MCF 10A (cell line): ENCODE measurements at regions of chr1 and their contacts with region 1.

Region 1: DNA sequence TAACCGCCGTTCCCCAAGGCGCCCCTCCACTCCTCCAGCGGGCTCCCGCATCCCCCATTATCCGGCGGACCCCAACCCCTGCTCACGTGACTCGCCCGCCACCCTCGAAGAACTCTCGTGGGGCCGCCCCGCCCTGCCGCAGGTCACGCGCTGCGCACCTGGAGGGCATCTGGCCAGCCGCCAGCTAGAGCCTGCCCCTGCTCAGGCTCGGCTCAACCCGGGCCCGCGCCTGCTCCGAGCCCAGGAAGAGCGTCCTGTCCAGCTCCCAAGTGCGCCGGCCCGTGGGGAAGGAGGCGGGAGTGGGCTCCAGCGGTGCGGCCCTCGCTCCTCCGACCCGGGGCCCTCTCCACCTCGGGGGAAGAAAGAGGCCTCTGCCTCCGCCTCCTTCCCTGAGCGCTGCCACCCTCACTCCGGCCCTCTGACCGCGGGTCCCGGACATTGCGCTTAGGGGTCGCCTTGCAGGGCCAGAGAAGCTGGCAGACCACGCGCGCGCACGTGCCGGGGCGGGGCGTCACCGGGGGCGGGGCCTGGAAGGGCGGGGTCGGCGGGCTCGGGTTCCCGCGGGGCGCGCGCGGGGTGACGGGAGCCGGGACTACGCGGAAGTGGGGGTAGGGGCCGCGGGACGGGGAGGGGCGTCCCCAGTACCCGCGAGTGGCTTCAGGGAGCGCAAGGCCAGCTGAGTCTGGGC is 28.4 kb downstream of the HMGN2 start:
- DNase-seq: peak; percentile 86
- H3K4me3 Mint-ChIP-seq: peak overlapping the region; percentile 86
- H3K27ac Mint-ChIP-seq: peak overlapping the region; percentile 91
- H3K4me1 Mint-ChIP-seq: no peaks in the 10 kb centered on the region
- H3K27me3 Mint-ChIP-seq: no peaks in the 10 kb centered on the region
- CTCF ChIP-seq: no peak

Region 2: DNA sequence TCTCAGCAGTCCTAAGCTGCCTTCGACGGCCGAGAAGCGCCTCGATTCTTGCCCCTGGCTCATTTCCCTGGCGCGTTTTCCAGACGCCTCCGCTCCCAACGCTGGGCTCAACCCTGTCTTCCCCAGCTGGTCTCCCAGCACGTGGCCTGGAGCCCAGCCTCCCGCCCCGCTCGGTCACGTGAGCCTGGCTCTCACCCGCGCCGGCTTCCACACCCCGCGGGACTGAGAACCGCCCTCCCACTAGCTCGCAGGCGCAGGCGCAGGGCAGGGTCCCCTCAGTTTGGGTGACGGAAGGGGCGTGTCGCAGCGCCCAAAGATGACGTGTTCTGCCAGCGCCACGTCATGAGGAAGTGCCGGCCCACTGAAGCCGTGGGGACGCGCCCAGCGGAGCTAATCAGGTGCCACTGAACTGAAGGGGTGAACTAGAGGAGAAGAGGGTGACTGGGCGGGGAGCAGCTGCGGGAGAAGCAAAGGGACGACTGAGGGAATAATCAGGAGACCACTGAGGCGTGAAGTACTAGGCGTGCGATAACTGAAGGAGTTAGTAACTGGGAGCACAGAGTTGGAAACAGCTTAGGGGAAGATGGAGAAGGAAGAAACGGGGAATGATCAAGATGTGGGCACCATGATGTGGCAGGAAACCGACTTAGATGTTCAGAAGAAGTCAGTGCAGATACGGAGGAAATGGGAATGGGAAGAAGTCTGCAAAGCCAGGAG is 68.5 kb before region 1 on chr1 and contains the start of gene DHDDS:
- CTCF ChIA-PET with region 1: no interaction called
- POLR2A ChIA-PET with region 1: interaction called, 11 read pairs
- intact Hi-C with region 1: no loop called
- DNase-seq: peak; percentile 97
- H3K4me3 Mint-ChIP-seq: peak within 1 kb of the TSS; percentile 94
- H3K27ac Mint-ChIP-seq: peak within 1 kb of the TSS; percentile 88
- H3K4me1 Mint-ChIP-seq: peaks cover 12% of the 10 kb centered on the region
- H3K27me3 Mint-ChIP-seq: no peaks in the 10 kb centered on the region
- CTCF ChIP-seq: no peak
- total RNA-seq, gene DHDDS: 48.2 and 56.2 TPM in 2 replicates

Region 3: DNA sequence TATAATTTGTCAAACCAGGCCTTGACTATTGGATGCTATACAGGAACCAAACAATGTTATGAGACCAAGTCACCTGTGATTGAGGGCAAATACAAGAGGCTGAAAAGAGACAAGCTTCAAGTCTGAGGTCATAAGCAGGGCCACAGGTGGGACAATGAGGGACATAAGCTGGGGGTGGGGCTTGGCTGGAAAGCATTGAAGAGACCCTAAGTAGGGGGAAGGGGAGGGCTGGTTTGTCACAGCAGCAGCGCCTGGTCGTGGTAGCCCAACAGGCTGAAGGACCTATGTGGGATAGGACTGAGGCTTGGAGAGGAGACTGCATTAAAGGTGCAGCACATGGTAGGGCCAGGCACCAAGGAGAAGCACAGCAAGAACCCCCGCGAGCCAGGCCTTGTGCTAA is 10.5 kb before region 1 on chr1:
- CTCF ChIA-PET with region 1: interaction called, 17 read pairs
- POLR2A ChIA-PET with region 1: interaction called, 17 read pairs
- intact Hi-C with region 1: no loop called
- DNase-seq: no peak
- H3K4me3 Mint-ChIP-seq: no peak overlapping the region
- H3K27ac Mint-ChIP-seq: no peak overlapping the region
- H3K4me1 Mint-ChIP-seq: no peaks in the 10 kb centered on the region
- H3K27me3 Mint-ChIP-seq: no peaks in the 10 kb centered on the region
- CTCF ChIP-seq: no peak

Region 4: GRCh38 chr1:26524181-26524580 is 23.5 kb after region 1 on chr1:
- CTCF ChIA-PET with region 1: interaction called, 9 read pairs
- POLR2A ChIA-PET with region 1: interaction called, 282 read pairs
- intact Hi-C with region 1: no loop called
- DNase-seq: peak; percentile 72
- H3K4me3 Mint-ChIP-seq: no peak overlapping the region
- H3K27ac Mint-ChIP-seq: no peak overlapping the region
- H3K4me1 Mint-ChIP-seq: peaks cover 22% of the 10 kb centered on the region
- H3K27me3 Mint-ChIP-seq: no peaks in the 10 kb centered on the region
- CTCF ChIP-seq: no peak

Region 5: GRCh38 chr1:26602378-26602959 is 101.8 kb after region 1 on chr1:
- CTCF ChIA-PET with region 1: interaction called, 7 read pairs
- POLR2A ChIA-PET with region 1: interaction called, 3 read pairs
- intact Hi-C with region 1: loop called (anchors 2 kb)
- DNase-seq: peak; percentile 77
- H3K4me3 Mint-ChIP-seq: no peak overlapping the region
- H3K27ac Mint-ChIP-seq: no peak overlapping the region
- H3K4me1 Mint-ChIP-seq: no peaks in the 10 kb centered on the region
- H3K27me3 Mint-ChIP-seq: peaks cover 28% of the 10 kb centered on the region
- CTCF ChIP-seq: peak; percentile 77